Left colon (tissue), 2 donors: ENCODE measurements at regions of chrX and their contacts with region 1.

Region 1: GRCh38 chrX:83630662-83631061 is 122.6 kb downstream of the POU3F4 start:
- DNase-seq: no peak
- ATAC-seq: no peak

Region 2: GRCh38 chrX:83185887-83186286 is 444.8 kb before region 1 on chrX:
- intact Hi-C with region 1: no loop called
- DNase-seq: no peak
- ATAC-seq: no peak

Region 3: GRCh38 chrX:83319023-83319422 is 311.6 kb before region 1 on chrX:
- intact Hi-C with region 1: no loop called
- DNase-seq: no peak
- ATAC-seq: no peak

Region 4: DNA sequence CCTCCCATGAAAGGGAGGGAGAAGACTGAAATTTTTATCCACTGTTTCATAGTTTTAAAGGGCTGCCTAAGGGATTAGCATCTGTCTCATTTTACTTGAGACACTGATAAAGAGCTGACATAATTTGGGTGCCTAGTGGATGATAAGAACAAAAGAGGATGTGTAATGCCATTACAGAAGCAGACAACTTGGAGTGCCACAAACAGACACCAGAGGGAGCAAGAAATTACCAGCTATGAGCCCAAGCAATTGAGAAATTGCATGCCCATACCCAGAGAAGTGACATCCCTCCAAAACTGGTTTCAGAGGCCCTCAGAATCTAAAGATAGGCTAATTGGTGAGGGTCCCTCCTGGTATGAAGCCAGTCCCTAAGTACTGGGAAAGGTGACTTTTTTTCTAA is 161.1 kb before region 1 on chrX:
- intact Hi-C with region 1: loop called in 1 of 2 experiments (anchors 5 kb)
- DNase-seq: peak in 1 of 2 donors; percentile 11
- ATAC-seq: peak; percentile 42